Activated naive CD8-positive, alpha-beta T cell treated with anti-CD3 and anti-CD28 coated beads, Interleukin-2, amount 10 ng/mL, durations not matched to agents 7 days and 5 days (primary cell): ENCODE measurements at regions of chr15 and their contacts with region 1.

Region 1: DNA sequence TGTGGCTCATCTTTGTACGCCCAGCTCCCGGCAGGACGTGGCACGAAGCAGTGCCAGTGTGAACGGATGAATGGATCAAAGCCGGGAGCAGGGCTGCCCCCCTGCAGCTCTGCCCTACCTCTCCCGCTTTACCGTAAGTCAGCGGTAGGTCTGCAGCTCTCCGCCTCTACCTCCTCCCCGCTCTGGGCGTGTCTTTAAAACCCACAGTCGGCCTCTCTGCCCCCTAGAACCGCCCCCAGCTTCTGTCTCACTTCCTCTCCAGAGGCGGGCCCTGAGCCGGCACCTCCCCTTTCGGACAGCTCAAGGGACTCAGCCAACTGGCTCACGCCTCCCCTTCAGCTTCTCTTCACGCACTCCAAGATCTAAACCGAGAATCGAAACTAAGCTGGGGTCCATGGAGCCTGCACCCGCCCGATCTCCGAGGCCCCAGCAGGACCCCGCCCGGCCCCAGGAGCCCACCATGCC is at the start of gene PML:
- DNase-seq: peak; percentile 91
- ATAC-seq: peak; percentile 81
- H3K4me3 Mint-ChIP-seq: peak within 1 kb of the TSS; percentile 96
- H3K27ac Mint-ChIP-seq: peak within 1 kb of the TSS; percentile 96
- H3K4me1 Mint-ChIP-seq: peaks cover 44% of the 10 kb centered on the region
- H3K27me3 Mint-ChIP-seq: no peaks in the 10 kb centered on the region
- total RNA-seq, gene PML: 118 to 120 TPM

Region 2: DNA sequence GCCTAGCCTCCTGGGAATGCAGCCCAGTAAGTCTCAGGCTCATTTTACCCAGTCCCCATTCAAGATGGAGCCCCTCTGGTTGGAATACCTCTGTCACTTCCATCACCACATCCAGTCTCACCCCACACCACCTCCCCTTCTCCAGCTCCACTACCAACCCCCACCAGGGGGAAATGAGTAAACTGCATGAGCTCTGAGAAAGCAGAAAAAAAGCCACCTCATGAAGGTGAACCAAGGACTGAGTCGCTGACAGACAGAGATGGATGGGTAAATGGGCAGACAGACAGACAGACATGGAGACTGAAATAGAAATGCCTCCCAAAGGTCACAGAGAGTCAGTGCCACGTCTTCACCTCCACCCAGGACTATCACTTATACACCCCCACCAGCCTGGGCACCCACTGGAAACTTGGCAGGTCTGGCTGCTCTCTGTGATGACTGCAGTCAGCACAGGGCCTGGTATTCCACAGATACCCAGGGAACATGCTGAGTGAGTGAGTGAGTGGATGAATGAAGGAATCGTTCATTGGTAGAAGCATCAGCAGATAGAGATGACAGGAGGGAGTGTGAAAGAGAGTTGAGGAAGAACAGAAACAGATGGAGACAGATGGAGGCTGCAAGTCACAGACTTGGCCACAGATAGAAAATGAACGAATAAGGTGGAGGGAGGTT is 73.1 kb before region 1 on chr15:
- POLR2A ChIA-PET with region 1: no interaction called
- DNase-seq: no peak
- ATAC-seq: no peak
- H3K4me3 Mint-ChIP-seq: no peak overlapping the region
- H3K27ac Mint-ChIP-seq: peak overlapping the region; percentile 65
- H3K4me1 Mint-ChIP-seq: peaks cover 50% of the 10 kb centered on the region
- H3K27me3 Mint-ChIP-seq: no peaks in the 10 kb centered on the region

Region 3: GRCh38 chr15:73964736-73965093 is 29.7 kb before region 1 on chr15:
- POLR2A ChIA-PET with region 1: interaction called, 20 read pairs
- DNase-seq: peak; percentile 93
- ATAC-seq: peak; percentile 85
- H3K4me3 Mint-ChIP-seq: peak overlapping the region; percentile 67
- H3K27ac Mint-ChIP-seq: peak overlapping the region; percentile 89
- H3K4me1 Mint-ChIP-seq: peaks cover 34% of the 10 kb centered on the region
- H3K27me3 Mint-ChIP-seq: no peaks in the 10 kb centered on the region

Region 4: GRCh38 chr15:73972984-73973682 is 21.3 kb before region 1 on chr15:
- POLR2A ChIA-PET with region 1: interaction called, 39 read pairs
- DNase-seq: peak; percentile 82
- ATAC-seq: peak; percentile 73
- H3K4me3 Mint-ChIP-seq: peak overlapping the region; percentile 28
- H3K27ac Mint-ChIP-seq: no peak overlapping the region
- H3K4me1 Mint-ChIP-seq: peaks cover 34% of the 10 kb centered on the region
- H3K27me3 Mint-ChIP-seq: peaks cover 3% of the 10 kb centered on the region

Region 5: DNA sequence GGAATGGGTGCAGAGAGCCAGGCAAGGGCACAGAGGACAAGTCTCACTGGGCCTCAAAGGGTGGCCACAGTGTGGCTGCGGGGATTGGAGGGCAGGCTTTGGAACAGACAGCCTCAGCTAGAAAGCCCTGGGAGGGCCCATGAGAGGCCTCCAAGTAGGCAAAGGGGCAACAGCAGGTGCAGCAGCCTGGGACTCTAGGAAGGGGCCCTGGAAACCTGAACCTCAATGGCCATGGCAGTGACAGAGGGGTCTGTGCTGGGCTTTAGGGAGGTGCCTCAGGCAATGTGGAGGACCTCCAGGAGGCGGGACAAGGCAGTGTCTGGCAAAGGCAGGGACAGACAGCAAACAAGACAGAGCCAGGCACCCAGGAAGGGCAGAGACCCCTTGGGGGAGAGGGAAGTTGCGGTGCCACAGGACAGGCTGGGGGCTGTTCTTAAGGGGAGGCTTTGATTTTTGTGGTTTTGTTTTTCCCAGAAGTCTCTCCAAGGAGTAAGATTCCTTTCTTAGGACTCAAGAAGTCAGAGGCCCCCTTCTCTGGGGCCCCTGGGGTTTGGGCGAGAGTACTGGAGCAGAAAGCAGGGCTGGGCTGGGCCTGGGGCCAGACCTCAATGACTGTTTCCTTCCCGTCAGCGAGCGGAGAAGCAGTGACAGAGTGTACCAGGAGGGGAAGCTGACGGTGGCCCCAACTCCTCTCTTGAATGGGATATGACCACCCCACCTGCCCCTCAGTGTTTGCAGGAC is 12.1 kb before region 1 on chr15:
- POLR2A ChIA-PET with region 1: interaction called, 34 read pairs
- DNase-seq: no peak
- ATAC-seq: peak; percentile 70
- H3K4me3 Mint-ChIP-seq: peak overlapping the region; percentile 63
- H3K27ac Mint-ChIP-seq: peak overlapping the region; percentile 94
- H3K4me1 Mint-ChIP-seq: peaks cover 49% of the 10 kb centered on the region
- H3K27me3 Mint-ChIP-seq: peaks cover 3% of the 10 kb centered on the region

Region 6: DNA sequence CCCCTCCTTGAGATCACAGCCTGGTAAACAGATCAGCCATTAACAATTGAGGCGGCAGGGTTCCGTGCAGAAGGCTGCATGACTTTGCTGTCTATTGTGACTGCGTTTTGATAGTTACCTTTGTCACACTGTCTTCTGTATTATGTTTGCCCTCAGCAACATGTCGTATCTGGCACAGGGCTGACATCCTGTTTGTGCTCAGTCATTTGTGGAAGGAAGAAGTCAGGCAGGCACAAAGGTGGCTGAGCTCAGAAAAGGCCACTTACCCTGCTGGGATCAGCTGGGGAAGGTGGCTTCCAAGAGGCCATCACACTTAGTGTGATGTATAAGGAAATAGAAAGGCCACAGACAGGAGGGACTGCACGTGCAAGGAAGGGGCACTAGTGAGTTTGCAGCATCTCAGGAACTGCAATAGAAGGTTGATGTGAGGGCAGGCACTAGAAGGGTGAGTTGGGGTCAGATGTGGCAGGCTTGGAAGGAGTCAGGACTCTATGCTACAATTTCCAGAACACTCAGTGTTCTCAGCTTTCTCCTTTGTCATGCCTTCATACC is 13.4 kb after region 1 on chr15:
- POLR2A ChIA-PET with region 1: interaction called, 15 read pairs
- DNase-seq: no peak
- ATAC-seq: peak; percentile 91
- H3K4me3 Mint-ChIP-seq: peak overlapping the region; percentile 54
- H3K27ac Mint-ChIP-seq: peak overlapping the region; percentile 75
- H3K4me1 Mint-ChIP-seq: peaks cover 58% of the 10 kb centered on the region
- H3K27me3 Mint-ChIP-seq: no peaks in the 10 kb centered on the region